ENCODE measurements at regions of chr1 and their contacts with region 1.

Region 1: DNA sequence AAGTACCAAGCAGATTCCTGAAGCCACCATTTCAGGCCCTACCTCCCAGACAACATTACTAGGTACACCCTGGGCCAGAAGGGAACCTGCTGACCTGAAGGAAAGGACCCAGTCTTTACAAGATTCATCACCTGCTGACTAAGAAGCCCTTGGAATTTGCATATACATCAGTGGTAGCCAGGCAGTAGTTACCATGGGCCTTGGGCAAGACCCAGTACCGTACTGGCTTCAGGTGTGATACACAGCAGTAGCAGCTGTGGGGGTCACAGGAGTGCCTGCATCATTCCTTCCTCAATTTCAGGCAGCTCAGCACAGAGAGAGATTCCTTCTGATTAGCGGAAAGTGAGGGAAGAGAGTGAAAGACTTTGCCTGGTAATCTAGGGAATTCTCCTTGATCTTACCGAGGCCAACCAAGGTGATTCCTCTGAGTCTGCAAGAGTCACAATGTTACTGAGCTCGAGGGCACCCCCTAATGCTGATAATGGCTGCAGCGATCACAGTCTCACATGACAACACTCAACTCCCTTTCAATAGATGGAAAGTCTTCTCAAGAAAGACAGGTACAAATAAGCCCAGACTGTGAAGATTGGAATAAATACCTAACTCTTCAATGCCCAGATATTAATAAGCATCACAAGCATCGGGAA is 22.0 kb upstream of the UHMK1 start:
- DNase-seq: no peak
- ATAC-seq: no peak; the same call in 2 of the 3 replicates
- H3K4me3 ChIP-seq: no peak overlapping the region
- H3K27ac ChIP-seq: no peak overlapping the region
- H3K4me1 ChIP-seq: no peaks in the 10 kb centered on the region
- H3K27me3 ChIP-seq: no peaks in the 10 kb centered on the region
- CTCF ChIP-seq: no peak; the same call in 1 of the 2 replicates
- EP300 ChIP-seq: no peak
- POLR2A ChIP-seq: no peak
- RAD21 ChIP-seq: no peak

Region 2: GRCh38 chr1:162463021-162463420 is 12.6 kb before region 1 on chr1:
- CTCF ChIA-PET with region 1: no interaction called
- POLR2A ChIA-PET with region 1: no interaction called
- in situ Hi-C with region 1: no loop called
- intact Hi-C with region 1: loop called (anchors 2 kb)
- DNase-seq: no peak
- ATAC-seq: no peak
- H3K4me3 ChIP-seq: no peak overlapping the region
- H3K27ac ChIP-seq: no peak overlapping the region
- H3K4me1 ChIP-seq: no peaks in the 10 kb centered on the region
- H3K27me3 ChIP-seq: no peaks in the 10 kb centered on the region
- CTCF ChIP-seq: no peak
- EP300 ChIP-seq: no peak
- POLR2A ChIP-seq: no peak
- RAD21 ChIP-seq: no peak

Measured in HepG2 (cell line).